Activated CD4-positive, alpha-beta T cell treated with anti-CD3 and anti-CD28 coated beads for 36 hours (primary cell): ENCODE measurements at regions of chr21 and their contacts with region 1.

Region 1: GRCh38 chr21:29232601-29233546 is 65.8 kb upstream of the BACH1 start:
- DNase-seq: no peak
- ATAC-seq: peak; percentile 8
- H3K4me3 Mint-ChIP-seq: no peak overlapping the region
- H3K27ac Mint-ChIP-seq: peak overlapping the region; percentile 76
- H3K4me1 Mint-ChIP-seq: peaks cover 49% of the 10 kb centered on the region
- H3K27me3 Mint-ChIP-seq: peaks cover 5% of the 10 kb centered on the region

Region 2: GRCh38 chr21:28771790-28772501 is 460.9 kb before region 1 on chr21:
- CTCF ChIA-PET with region 1: no interaction called
- POLR2A ChIA-PET with region 1: no interaction called
- intact Hi-C with region 1: loop called (anchors 10 kb)
- DNase-seq: no peak
- ATAC-seq: peak; percentile 27
- H3K4me3 Mint-ChIP-seq: no peak overlapping the region
- H3K27ac Mint-ChIP-seq: peak overlapping the region; percentile 55
- H3K4me1 Mint-ChIP-seq: peaks cover 57% of the 10 kb centered on the region
- H3K27me3 Mint-ChIP-seq: no peaks in the 10 kb centered on the region

Region 3: GRCh38 chr21:29078869-29079767 is 153.8 kb before region 1 on chr21:
- CTCF ChIA-PET with region 1: interaction called, 3 read pairs
- POLR2A ChIA-PET with region 1: interaction called, 5 read pairs
- intact Hi-C with region 1: loop called in 1 of 2 experiments (anchors 2 kb)
- DNase-seq: peak; percentile 61
- ATAC-seq: peak; percentile 62
- H3K4me3 Mint-ChIP-seq: peak overlapping the region; percentile 80
- H3K27ac Mint-ChIP-seq: peak overlapping the region; percentile 85
- H3K4me1 Mint-ChIP-seq: peaks cover 59% of the 10 kb centered on the region
- H3K27me3 Mint-ChIP-seq: no peaks in the 10 kb centered on the region

Region 4: GRCh38 chr21:29181799-29182470 is 50.9 kb before region 1 on chr21:
- CTCF ChIA-PET with region 1: no interaction called
- POLR2A ChIA-PET with region 1: no interaction called
- intact Hi-C with region 1: loop called in 1 of 2 experiments (anchors 5 kb)
- DNase-seq: peak; percentile 30
- ATAC-seq: peak; percentile 85
- H3K4me3 Mint-ChIP-seq: peak overlapping the region; percentile 53
- H3K27ac Mint-ChIP-seq: peak overlapping the region; percentile 90
- H3K4me1 Mint-ChIP-seq: peaks cover 17% of the 10 kb centered on the region
- H3K27me3 Mint-ChIP-seq: no peaks in the 10 kb centered on the region

Region 5: GRCh38 chr21:29208682-29209059 is 24.2 kb before region 1 on chr21:
- CTCF ChIA-PET with region 1: interaction called, 4 read pairs
- POLR2A ChIA-PET with region 1: interaction called, 3 read pairs
- intact Hi-C with region 1: loop called in 1 of 2 experiments (anchors 2 kb)
- DNase-seq: no peak
- ATAC-seq: peak; percentile 54
- H3K4me3 Mint-ChIP-seq: no peak overlapping the region
- H3K27ac Mint-ChIP-seq: no peak overlapping the region
- H3K4me1 Mint-ChIP-seq: peaks cover 17% of the 10 kb centered on the region
- H3K27me3 Mint-ChIP-seq: peaks cover 2% of the 10 kb centered on the region

Region 6: GRCh38 chr21:29342363-29342957 is 109.6 kb after region 1 on chr21:
- CTCF ChIA-PET with region 1: no interaction called
- POLR2A ChIA-PET with region 1: interaction called, 3 read pairs
- intact Hi-C with region 1: loop called (anchors 1 to 5 kb)
- DNase-seq: peak; percentile 79
- ATAC-seq: peak; percentile 94
- H3K4me3 Mint-ChIP-seq: peak overlapping the region; percentile 29
- H3K27ac Mint-ChIP-seq: peak overlapping the region; percentile 79
- H3K4me1 Mint-ChIP-seq: peaks cover 42% of the 10 kb centered on the region
- H3K27me3 Mint-ChIP-seq: no peaks in the 10 kb centered on the region

Region 7: DNA sequence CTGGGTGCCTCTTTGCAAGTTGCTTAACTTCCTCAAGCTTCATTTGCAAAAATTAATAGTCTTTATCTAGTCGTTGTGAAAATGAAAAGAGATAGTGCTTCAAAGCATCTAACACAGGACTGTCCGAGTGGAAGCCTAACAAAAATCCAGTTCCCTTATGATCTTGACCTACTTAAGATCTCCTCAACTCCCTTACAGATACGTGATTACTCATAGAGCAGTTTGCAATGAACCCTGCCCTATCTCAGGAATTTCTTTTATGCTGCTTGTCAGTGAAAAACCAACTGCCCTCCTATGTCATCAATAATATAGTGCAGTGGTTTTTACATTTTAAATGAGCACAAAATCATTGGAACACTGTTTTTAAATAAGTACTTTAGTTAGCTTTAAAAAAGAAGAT is 380.1 kb after region 1 on chr21:
- CTCF ChIA-PET with region 1: no interaction called
- POLR2A ChIA-PET with region 1: no interaction called
- intact Hi-C with region 1: no loop called
- DNase-seq: no peak
- ATAC-seq: no peak
- H3K4me3 Mint-ChIP-seq: no peak overlapping the region
- H3K27ac Mint-ChIP-seq: no peak overlapping the region
- H3K4me1 Mint-ChIP-seq: no peaks in the 10 kb centered on the region
- H3K27me3 Mint-ChIP-seq: no peaks in the 10 kb centered on the region